RWPE1 (cell line): ENCODE measurements at regions of chr15 and their contacts with region 1.

Region 1: GRCh38 chr15:96500508-96500907 is 170.0 kb downstream of the NR2F2 start:
- DNase-seq: no peak
- H3K27ac ChIP-seq: no peak overlapping the region
- CTCF ChIP-seq: no peak

Region 2: DNA sequence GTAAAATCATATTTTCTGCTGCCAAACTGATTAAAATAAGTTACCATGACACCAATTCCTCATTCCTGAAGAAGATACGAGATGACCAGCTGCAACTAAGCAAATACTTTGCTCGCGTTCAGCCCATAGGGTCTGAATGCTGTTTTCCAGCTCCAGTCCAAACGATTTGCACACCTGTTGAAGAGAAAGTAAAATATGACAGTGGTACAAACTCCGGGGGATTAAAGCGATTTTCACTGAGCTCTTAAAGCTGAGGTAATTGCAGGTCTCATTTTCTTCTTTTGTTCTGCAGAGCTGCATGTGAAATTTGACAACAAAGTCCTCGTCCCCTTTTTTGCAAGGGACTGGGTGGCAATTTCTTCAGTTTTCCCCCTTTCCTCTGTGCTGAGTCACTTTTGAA is 51.6 kb before region 1 on chr15:
- CTCF ChIA-PET with region 1: interaction called, 10 read pairs
- POLR2A ChIA-PET with region 1: no interaction called
- DNase-seq: no peak
- H3K27ac ChIP-seq: no peak overlapping the region
- CTCF ChIP-seq: no peak